Sigmoid colon (tissue), 7 donors: ENCODE measurements at regions of chr6 and their contacts with region 1.

Region 1: GRCh38 chr6:34757687-34758274 is 476 bp downstream of the SNRPC start:
- DNase-seq: no peak
- H3K4me3 ChIP-seq: peak overlapping the region; percentile 59 to 69 (median 64)
- H3K27ac ChIP-seq: peak overlapping the region; percentile 92 to 96 (median 94)
- H3K4me1 ChIP-seq: peaks cover 0 to 16% (median 9%) of the 10 kb centered on the region in 4 donors
- H3K27me3 ChIP-seq: no peaks in the 10 kb centered on the region
- CTCF ChIP-seq: no peak
- EP300 ChIP-seq: no peak
- POLR2A ChIP-seq: no peak

Region 2: DNA sequence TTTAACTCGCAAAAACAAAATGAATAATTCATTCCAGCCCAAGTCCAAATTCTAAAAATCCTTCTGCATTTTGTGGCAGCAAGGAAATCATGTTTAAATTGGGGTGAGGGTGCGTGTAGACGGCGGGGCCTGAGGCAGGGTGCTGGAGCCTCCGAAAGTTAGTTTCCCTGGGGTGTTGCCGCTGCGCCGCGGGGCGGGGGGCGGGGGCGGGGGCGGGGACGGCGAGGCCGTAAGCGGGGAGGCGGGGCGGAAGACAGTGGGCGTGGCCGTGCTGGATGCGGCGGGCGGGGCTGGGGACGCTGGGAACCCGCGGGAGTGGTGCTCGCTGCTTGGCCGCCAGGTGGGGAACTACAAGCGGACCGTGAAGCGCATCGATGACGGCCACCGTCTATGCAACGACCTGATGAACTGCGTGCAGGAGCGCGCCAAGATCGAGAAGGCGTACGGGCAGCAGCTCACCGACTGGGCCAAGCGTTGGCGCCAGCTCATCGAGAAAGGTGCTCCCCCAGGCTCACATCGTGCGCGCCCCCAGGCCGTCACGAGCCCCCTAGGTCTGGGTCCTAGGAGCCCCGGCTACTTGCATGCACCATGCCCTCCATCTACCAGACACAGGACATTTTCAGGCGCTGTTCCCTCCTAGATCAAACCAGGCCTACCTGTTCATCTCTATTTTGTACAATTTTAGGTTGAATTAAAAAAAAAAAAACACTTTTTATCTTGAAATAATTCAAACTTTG is 230.6 kb before region 1 on chr6:
- intact Hi-C with region 1: loop called (anchors 2 kb)
- DNase-seq: peak; percentile 97
- H3K4me3 ChIP-seq: peak overlapping the region in 3 of 4 donors; percentile 6 to 35 (median 30)
- H3K27ac ChIP-seq: peak overlapping the region; percentile 39 to 67 (median 58)
- H3K4me1 ChIP-seq: peaks cover 0 to 13% (median 8%) of the 10 kb centered on the region in 4 donors
- H3K27me3 ChIP-seq: no peaks in the 10 kb centered on the region
- CTCF ChIP-seq: peak; percentile 58 to 73 (median 62)
- EP300 ChIP-seq: no peak
- POLR2A ChIP-seq: no peak

Region 3: DNA sequence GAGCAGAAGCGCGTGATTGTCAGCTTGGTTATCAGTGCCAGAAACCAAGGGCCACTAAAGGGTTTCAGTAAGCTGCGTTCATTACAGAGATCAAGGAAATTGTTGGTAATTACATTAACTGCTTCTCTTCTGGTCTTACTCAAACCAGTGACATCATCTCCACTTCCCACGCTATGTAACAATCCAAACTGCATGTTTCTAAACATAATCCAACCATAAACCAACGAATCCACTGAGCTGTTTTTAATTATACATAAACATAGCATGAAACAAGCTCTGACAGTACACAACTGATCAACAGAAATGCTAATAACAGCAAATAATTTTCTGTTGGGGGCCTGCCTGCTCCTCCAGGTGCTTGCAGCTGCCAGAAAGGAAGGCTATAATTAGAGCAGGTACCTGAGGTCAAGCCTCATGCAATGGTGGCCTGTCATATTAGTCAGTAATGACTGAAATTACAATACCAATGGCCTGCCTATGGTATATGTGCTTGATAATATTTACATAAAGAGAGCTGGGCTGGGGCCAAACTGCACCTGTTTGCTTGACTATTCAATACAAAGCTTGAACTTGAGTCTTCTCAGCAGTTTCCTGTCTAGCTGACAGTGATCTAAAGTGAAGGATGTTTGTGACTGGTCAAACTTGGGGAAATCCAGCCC is 101.3 kb before region 1 on chr6:
- intact Hi-C with region 1: loop called (anchors 5 kb)
- DNase-seq: no peak
- H3K4me3 ChIP-seq: peak overlapping the region in 3 of 4 donors; percentile 37 to 45 (median 44)
- H3K27ac ChIP-seq: peak overlapping the region; percentile 86 to 94 (median 91)
- H3K4me1 ChIP-seq: peaks cover 0 to 50% (median 39%) of the 10 kb centered on the region in 4 donors
- H3K27me3 ChIP-seq: no peaks in the 10 kb centered on the region
- CTCF ChIP-seq: no peak
- EP300 ChIP-seq: no peak
- POLR2A ChIP-seq: no peak

Region 4: GRCh38 chr6:34696739-34697543 is 60.8 kb before region 1 on chr6 and contains the start of gene ILRUN:
- intact Hi-C with region 1: loop called (anchors 2 kb)
- DNase-seq: peak; percentile 98
- H3K4me3 ChIP-seq: peak within 1 kb of the TSS; percentile 80 to 98 (median 96)
- H3K27ac ChIP-seq: peak within 1 kb of the TSS; percentile 95 to 99 (median 97)
- H3K4me1 ChIP-seq: peaks cover 0 to 35% (median 29%) of the 10 kb centered on the region in 4 donors
- H3K27me3 ChIP-seq: no peaks in the 10 kb centered on the region
- CTCF ChIP-seq: no peak
- EP300 ChIP-seq: peak in 1 of 4 donors; percentile 17
- POLR2A ChIP-seq: peak; percentile 50 to 81
- total RNA-seq, gene ILRUN: 56.3 to 79.3 (median 78.4) TPM

Region 5: DNA sequence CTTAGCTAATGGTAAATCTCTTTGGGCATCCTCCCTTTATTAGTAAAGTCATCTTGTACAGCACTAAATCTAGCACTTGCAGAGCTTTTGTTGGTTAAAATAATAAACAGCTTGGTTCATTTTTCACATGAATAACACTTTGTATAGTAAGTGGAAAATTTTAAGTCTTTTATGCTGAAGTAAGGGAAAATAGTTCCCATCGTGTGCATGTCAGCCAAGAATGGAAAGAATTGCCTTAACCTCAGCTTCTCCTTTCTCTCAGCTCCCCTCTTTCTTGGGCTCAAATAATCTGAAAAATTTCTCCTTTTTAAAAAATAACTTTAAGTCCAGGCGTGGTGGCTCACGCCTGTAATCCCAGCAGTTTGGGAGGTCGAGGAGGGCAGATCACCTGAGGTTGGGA is 16.1 kb after region 1 on chr6:
- intact Hi-C with region 1: no loop called
- DNase-seq: no peak
- H3K4me3 ChIP-seq: no peak overlapping the region
- H3K27ac ChIP-seq: no peak overlapping the region
- H3K4me1 ChIP-seq: no peaks in the 10 kb centered on the region
- H3K27me3 ChIP-seq: no peaks in the 10 kb centered on the region
- CTCF ChIP-seq: no peak
- EP300 ChIP-seq: no peak
- POLR2A ChIP-seq: no peak

Region 6: DNA sequence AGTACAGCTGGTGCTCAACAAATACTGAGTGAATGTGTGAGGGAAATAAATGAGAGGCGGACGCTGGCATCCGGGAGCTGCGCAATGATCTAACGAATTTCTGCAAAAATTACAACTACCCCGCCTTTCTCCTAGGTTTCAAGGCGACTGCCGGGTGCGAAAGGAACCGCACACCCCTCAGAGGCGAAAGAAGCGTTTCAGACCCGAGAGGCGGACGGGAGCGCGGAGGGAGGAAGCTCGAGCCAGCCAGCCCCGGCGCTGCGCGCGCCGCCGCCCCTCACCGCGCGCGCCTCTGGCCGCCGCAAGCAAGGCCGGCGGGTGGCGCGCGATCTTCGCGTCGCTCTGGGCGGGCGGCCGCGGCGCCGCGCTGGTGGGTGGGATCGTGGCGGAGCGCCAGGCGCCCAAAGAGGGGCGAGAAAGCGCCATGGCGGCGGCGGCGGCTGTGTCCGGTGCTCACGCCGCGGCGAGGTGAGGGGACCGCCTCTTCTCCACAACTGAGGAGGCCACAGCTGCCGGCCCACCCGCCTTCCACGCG is 34.0 kb after region 1 on chr6 and contains the start of gene BLTP3A:
- intact Hi-C with region 1: loop called (anchors 2 kb)
- DNase-seq: peak; percentile 76
- H3K4me3 ChIP-seq: peak within 1 kb of the TSS; percentile 68 to 98 (median 79)
- H3K27ac ChIP-seq: peak within 1 kb of the TSS; percentile 91 to 95 (median 92)
- H3K4me1 ChIP-seq: peaks cover 0 to 20% (median 13%) of the 10 kb centered on the region in 4 donors
- H3K27me3 ChIP-seq: no peaks in the 10 kb centered on the region
- CTCF ChIP-seq: no peak
- EP300 ChIP-seq: no peak
- POLR2A ChIP-seq: no peak
- total RNA-seq, gene BLTP3A: 6.7 to 11.6 (median 7.2) TPM

Region 7: GRCh38 chr6:34887753-34888513 is 130.2 kb after region 1 on chr6 and contains the start of gene TAF11:
- intact Hi-C with region 1: loop called (anchors 1 kb)
- DNase-seq: peak; percentile 97
- H3K4me3 ChIP-seq: peak within 1 kb of the TSS; percentile 67 to 89 (median 79)
- H3K27ac ChIP-seq: peak within 1 kb of the TSS; percentile 87 to 93 (median 90)
- H3K4me1 ChIP-seq: peaks cover 0 to 38% (median 25%) of the 10 kb centered on the region in 4 donors
- H3K27me3 ChIP-seq: no peaks in the 10 kb centered on the region
- CTCF ChIP-seq: no peak
- EP300 ChIP-seq: peak in 1 of 4 donors; percentile 78
- POLR2A ChIP-seq: peak; percentile 75 to 78
- total RNA-seq, gene TAF11: 31.0 to 37.7 (median 31.4) TPM